HEK293 (cell line): ENCODE measurements at regions of chr1 and their contacts with region 1.

Region 1: GRCh38 chr1:26999440-26999987 is 6.0 kb downstream of the TRNP1 start:
- H3K4me3 ChIP-seq: no peak overlapping the region
- H3K27ac ChIP-seq: no peak overlapping the region
- H3K4me1 ChIP-seq: no peaks in the 10 kb centered on the region; the same call in 1 of the 2 replicates
- CTCF ChIP-seq: no peak

Region 2: GRCh38 chr1:26882696-26883463 is 116.6 kb before region 1 on chr1:
- CTCF ChIA-PET with region 1: no interaction called
- POLR2A ChIA-PET with region 1: no interaction called
- H3K4me3 ChIP-seq: no peak overlapping the region
- H3K27ac ChIP-seq: no peak overlapping the region
- H3K4me1 ChIP-seq: no peaks in the 10 kb centered on the region
- CTCF ChIP-seq: no peak

Region 3: GRCh38 chr1:26986658-26987057 is 12.9 kb before region 1 on chr1:
- CTCF ChIA-PET with region 1: interaction called, 11 read pairs
- POLR2A ChIA-PET with region 1: interaction called, 3 read pairs
- H3K4me3 ChIP-seq: no peak overlapping the region
- H3K27ac ChIP-seq: no peak overlapping the region
- H3K4me1 ChIP-seq: no peaks in the 10 kb centered on the region
- CTCF ChIP-seq: no peak

Region 4: GRCh38 chr1:27010989-27011764 is 11.7 kb after region 1 on chr1:
- CTCF ChIA-PET with region 1: interaction called, 24 read pairs
- POLR2A ChIA-PET with region 1: interaction called, 5 read pairs
- H3K4me3 ChIP-seq: no peak overlapping the region
- H3K27ac ChIP-seq: no peak overlapping the region
- H3K4me1 ChIP-seq: no peaks in the 10 kb centered on the region
- CTCF ChIP-seq: no peak